KBM-7 (cell line): ENCODE measurements at regions of chr14 and their contacts with region 1.

Region 1: DNA sequence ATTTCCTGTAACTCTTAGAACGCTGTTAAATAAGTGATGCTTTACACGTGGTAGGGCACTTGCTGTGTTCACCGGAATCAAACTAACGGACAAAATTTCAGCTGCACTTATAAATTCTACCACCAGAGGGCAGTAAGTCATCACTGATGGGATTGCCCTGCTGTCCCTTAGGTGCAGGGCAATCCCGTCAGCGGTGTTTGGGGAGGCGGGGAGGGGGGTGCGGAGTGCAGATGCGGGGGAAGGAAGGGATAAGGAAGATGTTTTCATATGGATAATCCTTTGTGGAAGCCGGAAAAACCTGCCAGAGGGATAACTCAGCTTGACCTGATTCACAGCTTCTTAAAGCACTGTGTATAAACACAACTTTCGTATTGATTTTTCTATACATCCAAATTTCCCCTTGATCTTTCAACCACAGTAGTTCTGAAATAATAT is 21.7 kb upstream of the SLC10A1 start:
- DNase-seq: peak; percentile 84

Region 2: GRCh38 chr14:69090187-69090789 is 728.5 kb before region 1 on chr14:
- in situ Hi-C with region 1: no loop called
- DNase-seq: peak; percentile 38

Region 3: GRCh38 chr14:69673578-69674305 is 145.0 kb before region 1 on chr14:
- in situ Hi-C with region 1: no loop called
- DNase-seq: no peak

Region 4: GRCh38 chr14:70317969-70318634 is 499.3 kb after region 1 on chr14:
- in situ Hi-C with region 1: loop called (anchors 25 kb)
- DNase-seq: peak; percentile 35